Activated CD8-positive, alpha-beta memory T cell treated with anti-CD3 and anti-CD28 coated beads, Interleukin-2, amount 10 ng/mL, durations not matched to agents 7 days and 5 days (primary cell): ENCODE measurements at regions of chr18 and their contacts with region 1.

Region 1: DNA sequence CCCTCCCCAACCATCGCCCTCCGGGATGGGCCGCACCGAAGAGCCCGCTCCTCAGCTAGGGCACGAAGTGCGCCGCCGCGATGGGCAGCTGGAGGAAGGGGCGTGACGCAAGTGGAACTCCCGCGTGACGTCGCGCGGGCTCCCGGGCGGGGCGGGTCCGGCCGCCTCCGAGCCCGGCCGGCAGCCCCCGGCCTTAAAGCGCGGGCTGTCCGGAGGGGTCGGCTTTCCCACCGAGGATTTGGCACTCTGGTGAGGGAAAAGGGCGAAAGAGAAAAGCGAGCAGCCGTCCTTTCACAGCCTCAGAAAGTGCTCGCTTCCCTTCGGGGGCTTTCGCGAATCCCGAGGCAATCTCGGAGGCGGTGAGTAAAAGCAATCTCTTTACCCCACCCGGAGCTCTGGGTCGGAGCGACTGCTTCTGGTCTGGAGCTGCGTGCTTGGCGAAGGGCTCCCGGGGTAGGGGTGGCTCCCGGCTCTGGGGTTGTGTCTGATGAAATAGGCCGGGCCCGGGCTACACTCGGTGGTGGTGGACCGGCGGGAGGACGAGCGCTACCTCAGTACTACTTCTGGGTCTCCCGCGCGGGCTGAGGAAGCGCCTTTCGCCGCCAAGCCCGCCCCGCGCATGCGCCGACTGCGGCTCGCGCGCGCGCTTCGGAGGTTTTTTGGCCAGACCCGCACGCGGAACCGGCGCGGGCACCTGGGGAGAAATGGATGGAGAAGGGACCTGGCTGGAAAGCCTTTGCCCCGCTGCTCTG is at the start of gene RBBP8:
- DNase-seq: peak; percentile 87
- ATAC-seq: peak; percentile 86
- H3K4me3 Mint-ChIP-seq: peak within 1 kb of the TSS; percentile 86
- H3K27ac Mint-ChIP-seq: peak within 1 kb of the TSS; percentile 96
- H3K4me1 Mint-ChIP-seq: peaks cover 54% of the 10 kb centered on the region
- H3K27me3 Mint-ChIP-seq: no peaks in the 10 kb centered on the region
- total RNA-seq, gene RBBP8: 74.2 to 82.5 TPM

Region 2: DNA sequence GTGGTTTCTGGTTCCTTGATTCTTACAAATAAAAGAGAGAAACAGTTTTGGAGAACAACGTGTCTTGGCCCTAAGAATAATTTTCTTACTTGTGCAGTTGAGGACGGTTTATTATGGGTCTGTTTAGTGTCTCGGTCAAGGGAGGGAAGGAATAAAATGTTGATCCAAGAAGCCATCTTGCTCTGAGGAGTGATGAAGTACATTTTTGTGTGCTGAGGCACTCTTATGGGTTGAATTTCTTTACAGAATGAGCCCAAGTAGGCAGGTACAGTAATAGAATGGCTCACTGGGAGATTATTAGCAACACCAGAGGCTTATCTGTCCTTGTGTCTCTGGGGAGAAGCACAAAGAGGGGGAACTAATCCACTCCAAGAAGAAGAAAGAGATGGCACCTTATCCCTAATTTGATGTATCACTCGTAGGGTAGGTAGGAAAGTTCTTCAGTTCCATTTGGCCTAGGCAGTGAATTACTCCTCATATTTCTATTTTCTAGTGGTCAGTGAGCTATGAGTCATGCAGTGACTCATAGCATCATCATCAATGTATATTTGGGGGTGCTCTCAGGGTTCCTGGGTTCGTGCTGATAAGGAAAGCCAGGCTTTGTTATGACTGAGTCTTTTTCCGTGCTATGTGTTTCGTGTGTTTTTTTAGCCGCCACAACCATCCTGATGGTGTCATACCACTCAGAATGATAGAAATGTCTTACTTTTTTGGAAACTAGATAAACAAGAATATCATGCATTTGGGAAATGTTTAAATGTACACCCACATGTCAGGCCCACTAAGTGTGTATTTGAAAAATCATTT is 265.6 kb before region 1 on chr18:
- CTCF ChIA-PET with region 1: no interaction called
- DNase-seq: no peak
- ATAC-seq: no peak
- H3K4me3 Mint-ChIP-seq: no peak overlapping the region
- H3K27ac Mint-ChIP-seq: no peak overlapping the region
- H3K4me1 Mint-ChIP-seq: no peaks in the 10 kb centered on the region
- H3K27me3 Mint-ChIP-seq: peaks cover 4% of the 10 kb centered on the region

Region 3: GRCh38 chr18:22872900-22873551 is 60.4 kb before region 1 on chr18:
- CTCF ChIA-PET with region 1: no interaction called
- DNase-seq: no peak
- ATAC-seq: peak; percentile 60
- H3K4me3 Mint-ChIP-seq: peak overlapping the region; percentile 34
- H3K27ac Mint-ChIP-seq: peak overlapping the region; percentile 10
- H3K4me1 Mint-ChIP-seq: peaks cover 7% of the 10 kb centered on the region
- H3K27me3 Mint-ChIP-seq: peaks cover 13% of the 10 kb centered on the region

Region 4: DNA sequence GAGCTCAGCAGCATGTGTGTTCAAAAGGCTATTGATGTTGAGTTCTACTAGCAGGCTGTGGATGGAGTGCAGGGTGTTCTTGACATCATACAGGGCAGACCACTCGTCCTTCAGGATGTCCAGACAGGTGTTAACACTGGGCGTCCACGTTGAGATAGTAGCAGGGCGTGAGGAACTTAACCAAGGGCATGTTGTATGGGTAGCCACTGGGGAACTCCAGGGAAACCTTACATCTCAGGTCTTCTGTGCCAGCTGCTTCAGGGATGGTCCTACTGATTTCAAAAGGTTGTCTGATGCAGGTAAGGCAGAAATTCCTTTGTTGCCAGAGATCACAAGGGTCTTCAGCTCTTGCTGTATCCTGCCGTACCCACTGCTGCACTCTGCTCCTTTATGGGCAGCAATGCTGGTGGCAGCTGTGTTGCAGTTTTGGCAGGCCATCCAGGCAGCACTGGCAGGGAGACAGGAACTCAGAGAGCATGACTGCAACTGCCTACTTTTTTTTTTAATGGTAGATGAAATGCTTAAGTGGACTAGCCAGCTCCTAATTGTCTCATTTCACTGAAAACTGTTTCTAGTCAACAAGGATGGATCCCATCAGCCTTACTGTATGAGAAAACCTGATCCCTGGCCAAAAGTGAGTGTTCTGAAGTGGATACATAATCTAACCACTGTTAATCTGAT is 32.7 kb before region 1 on chr18:
- CTCF ChIA-PET with region 1: no interaction called
- DNase-seq: no peak
- ATAC-seq: no peak
- H3K4me3 Mint-ChIP-seq: no peak overlapping the region
- H3K27ac Mint-ChIP-seq: no peak overlapping the region
- H3K4me1 Mint-ChIP-seq: no peaks in the 10 kb centered on the region
- H3K27me3 Mint-ChIP-seq: peaks cover 16% of the 10 kb centered on the region

Region 5: DNA sequence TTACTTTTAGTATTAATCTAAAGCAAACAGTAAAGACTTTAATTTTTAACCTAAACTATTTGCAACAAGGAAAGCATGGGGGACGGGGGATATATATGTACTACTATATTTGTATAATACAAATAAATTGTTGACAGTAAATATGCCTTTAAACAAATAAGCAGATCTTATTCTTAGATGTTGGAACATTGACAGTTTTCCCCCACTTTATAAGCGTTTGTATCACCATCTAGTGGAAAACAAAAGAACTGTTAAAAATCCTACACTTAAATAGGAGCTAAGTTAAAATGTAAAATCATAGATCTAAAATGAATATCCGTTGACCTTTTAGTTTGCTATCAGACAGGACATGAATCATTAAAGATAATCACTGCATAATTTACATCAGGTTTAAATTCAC is 49.8 kb after region 1 on chr18:
- CTCF ChIA-PET with region 1: interaction called, 16 read pairs
- DNase-seq: no peak
- ATAC-seq: peak; percentile 36
- H3K4me3 Mint-ChIP-seq: no peak overlapping the region
- H3K27ac Mint-ChIP-seq: no peak overlapping the region
- H3K4me1 Mint-ChIP-seq: peaks cover 9% of the 10 kb centered on the region
- H3K27me3 Mint-ChIP-seq: no peaks in the 10 kb centered on the region